ENCODE measurements at regions of chr6 and their contacts with region 1.

Region 1: DNA sequence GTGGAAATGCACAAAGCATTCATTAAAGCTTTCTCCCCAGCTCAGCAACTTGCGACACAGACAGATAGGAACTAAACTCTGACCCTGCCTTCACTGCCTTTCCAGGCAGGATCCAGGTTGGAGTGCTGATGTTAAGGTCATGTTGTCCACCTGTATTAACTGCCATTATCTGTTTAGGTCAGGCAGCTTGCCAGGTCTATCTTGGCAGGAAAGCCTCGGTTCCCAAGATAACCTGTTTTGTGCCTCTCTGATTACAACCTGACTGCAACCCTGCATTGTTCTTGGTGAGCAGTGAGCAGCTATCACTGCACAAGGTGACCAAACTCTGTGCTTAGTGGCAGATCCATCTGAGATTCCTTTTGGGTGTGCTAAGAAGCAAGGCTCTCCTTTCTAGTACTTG is 23.2 kb upstream of the ELOVL2 start:
- DNase-seq: no peak
- H3K4me3 ChIP-seq: no peak overlapping the region
- H3K27ac ChIP-seq: no peak overlapping the region
- H3K4me1 ChIP-seq: no peaks in the 10 kb centered on the region
- H3K27me3 ChIP-seq: no peaks in the 10 kb centered on the region
- CTCF ChIP-seq: no peak

Region 2: DNA sequence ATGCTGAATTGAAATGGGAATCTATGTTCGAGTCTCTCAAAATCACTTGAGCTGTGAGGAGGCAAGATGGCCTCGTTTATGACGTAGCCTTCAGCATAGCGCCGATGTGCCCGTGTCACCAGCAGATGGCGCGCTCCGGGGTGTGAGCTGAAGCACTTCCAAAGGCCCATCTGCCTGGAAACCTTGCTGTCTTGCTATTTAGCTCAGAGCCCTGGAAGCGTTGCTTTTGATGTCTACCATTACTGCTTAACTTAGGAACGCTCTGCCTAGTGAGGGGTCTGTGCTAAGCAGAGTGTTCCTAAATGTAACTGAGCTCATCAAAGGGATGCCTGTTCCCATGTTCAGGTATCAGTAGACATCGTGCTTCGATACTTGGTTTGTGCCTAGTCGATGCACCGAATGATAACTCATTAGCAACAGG is 112.7 kb before region 1 on chr6:
- intact Hi-C with region 1: loop called (anchors 2 kb)
- DNase-seq: peak; percentile 74
- H3K4me3 ChIP-seq: no peak overlapping the region
- H3K27ac ChIP-seq: no peak overlapping the region
- H3K4me1 ChIP-seq: no peaks in the 10 kb centered on the region
- H3K27me3 ChIP-seq: no peaks in the 10 kb centered on the region
- CTCF ChIP-seq: peak; percentile 69